Sciatic nerve (tissue), 2 donors: ENCODE measurements at regions of chr1 and their contacts with region 1.

Region 1: DNA sequence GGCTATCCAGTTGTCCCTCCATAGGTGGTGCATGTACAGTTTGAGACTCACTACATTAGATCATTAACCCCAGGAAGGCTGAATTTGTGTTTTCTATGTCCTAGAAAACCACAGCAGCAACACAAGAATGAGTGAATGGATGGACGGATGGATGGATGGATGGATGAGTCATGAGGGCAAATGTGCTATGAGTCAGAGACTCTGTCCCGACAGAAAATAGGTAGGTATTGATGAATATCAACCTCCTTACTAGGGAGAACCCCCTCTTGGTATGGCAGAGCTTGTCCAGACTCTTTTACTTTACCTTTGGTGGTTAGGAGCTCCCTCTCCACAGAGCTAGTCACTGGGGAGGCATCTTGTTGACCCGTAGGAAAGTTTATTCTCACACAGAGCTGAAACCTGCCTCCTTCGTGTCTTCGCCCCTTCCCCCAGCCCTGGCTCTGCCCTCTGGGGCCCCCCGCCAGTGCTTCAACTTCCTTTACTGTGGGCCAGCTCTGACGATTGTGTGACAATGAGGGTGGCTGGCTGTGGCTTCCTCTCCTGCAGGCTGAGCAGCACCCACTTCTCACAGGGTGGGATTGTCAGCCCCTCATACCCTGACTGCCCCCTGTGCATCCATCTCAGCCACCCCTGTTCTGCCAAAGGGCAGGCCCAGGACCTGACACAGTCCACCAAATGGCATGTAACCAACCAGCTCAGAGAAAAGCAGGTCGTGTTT is 145.2 kb downstream of the FOXD2 start:
- DNase-seq: no peak
- ATAC-seq: no peak

Region 2: DNA sequence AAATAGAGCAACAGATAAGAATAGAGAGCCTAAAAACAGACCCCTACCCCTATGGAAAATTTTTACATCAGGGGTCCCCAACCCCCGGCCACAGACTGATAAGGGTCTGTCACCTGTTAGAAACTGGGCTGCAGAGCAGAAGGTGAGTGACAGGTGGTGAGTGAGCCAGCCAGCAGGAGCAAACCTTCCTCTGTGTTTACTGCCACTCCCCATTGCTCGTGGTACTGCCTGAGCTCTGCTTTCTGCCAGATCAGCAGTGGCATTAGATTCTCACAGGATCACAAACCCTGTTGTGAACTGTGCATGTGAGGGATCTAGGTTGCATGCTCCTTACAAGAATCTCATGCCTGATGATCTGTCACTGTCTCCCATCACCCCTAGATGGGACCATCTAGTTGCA is 28.9 kb after region 1 on chr1:
- intact Hi-C with region 1: loop called (anchors 1 kb)
- DNase-seq: no peak
- ATAC-seq: no peak

Region 3: DNA sequence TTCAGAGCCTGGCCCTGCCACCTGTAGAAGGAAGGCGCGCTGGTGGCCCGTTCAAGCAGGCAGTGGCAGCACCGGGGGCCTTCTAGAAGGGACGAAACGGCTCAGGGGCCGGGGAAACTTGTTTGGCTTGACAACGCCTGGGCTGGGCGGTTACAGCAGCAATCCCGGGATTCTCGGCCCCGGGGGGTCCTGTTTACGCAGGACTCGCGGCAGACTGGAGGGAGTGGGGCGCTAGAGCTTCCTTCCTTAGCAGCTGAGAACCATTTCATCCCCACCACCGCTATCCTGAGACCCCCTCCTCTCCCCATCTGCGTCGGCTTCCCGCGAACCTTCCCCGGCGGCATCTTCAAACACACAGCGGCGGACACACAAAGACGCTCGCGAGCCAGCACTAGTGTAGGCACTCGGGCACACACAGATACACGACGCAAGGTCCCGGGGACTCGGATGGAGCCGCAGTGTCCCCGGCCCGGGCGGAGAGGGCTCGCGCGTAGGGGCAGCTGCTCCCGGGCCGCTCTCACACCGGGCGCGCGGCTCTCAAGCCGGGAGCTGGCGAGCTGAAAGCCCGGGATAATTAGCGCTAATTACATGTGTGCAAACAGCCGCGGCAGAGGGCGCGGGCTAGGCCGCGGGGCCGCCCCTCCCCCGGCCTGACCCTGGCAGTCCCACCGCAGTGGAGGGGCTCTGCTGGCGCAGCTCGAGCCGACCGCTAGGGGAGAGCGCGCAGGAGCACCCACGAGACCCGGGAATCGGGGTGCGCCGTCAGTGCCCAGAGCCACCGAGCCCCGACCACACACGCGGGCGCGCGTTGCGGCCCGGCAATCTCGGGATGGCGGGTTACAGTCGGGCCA is 126.2 kb after region 1 on chr1:
- intact Hi-C with region 1: loop called (anchors 5 kb)
- DNase-seq: peak; percentile 74
- ATAC-seq: peak; percentile 47